ENCODE measurements at regions of chr20 and their contacts with region 1.

Region 1: GRCh38 chr20:12037521-12037920 is 119.8 kb downstream of the BTBD3 start:
- DNase-seq: no peak
- H3K4me3 ChIP-seq: no peak overlapping the region
- H3K27ac ChIP-seq: no peak overlapping the region
- H3K4me1 ChIP-seq: no peaks in the 10 kb centered on the region
- H3K27me3 ChIP-seq: no peaks in the 10 kb centered on the region
- CTCF ChIP-seq: no peak
- POLR2A ChIP-seq: no peak

Region 2: DNA sequence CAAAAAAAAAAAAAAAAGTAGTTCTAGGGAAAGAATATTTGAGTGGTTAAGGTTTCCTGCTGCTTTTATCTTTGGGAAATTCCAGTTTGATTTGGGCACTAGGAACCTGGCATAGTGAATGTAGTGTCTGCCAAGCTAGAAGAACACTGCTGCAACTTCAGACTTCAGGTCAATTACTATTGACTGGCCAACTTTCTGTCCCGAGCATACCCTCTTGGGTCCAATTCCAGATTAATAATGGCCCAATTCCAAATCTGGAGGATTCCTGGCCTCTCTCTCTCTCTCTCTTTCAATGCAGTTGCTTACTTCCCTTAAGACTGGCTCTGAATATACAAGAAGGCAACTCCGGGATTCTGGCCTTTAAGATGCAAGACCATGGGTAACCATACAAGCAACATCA is 1927.9 kb before region 1 on chr20:
- intact Hi-C with region 1: loop called (anchors 5 kb)
- DNase-seq: no peak
- H3K4me3 ChIP-seq: no peak overlapping the region
- H3K27ac ChIP-seq: no peak overlapping the region
- H3K4me1 ChIP-seq: no peaks in the 10 kb centered on the region
- H3K27me3 ChIP-seq: no peaks in the 10 kb centered on the region
- CTCF ChIP-seq: no peak
- POLR2A ChIP-seq: no peak

Region 3: GRCh38 chr20:10466325-10466724 is 1571.2 kb before region 1 on chr20:
- intact Hi-C with region 1: no loop called
- DNase-seq: no peak
- H3K4me3 ChIP-seq: no peak overlapping the region
- H3K27ac ChIP-seq: no peak overlapping the region
- H3K4me1 ChIP-seq: no peaks in the 10 kb centered on the region
- H3K27me3 ChIP-seq: no peaks in the 10 kb centered on the region
- CTCF ChIP-seq: no peak
- POLR2A ChIP-seq: no peak

Region 4: DNA sequence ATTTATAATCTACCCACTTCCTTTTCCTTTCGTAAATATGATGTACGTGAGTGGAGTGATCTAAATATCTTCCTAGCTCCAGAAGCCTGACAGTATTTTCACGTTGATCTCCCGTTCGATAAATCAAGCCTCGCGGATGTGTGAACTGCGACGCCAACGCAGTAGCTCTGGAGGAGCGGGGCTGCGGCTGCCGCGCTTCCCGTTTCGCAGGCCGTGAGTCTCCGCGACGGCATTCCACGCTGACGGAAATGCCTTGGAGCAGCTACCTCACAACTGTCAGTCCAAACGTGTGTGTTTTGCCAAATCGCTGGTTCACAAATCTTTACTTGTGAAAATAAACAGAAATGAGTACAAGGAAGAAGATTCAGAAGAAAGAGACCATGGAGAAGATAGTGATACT is 78.7 kb before region 1 on chr20:
- intact Hi-C with region 1: no loop called
- DNase-seq: no peak
- H3K4me3 ChIP-seq: peak overlapping the region in 2 of 3 donors; percentile 7 to 10
- H3K27ac ChIP-seq: no peak overlapping the region
- H3K4me1 ChIP-seq: no peaks in the 10 kb centered on the region
- H3K27me3 ChIP-seq: no peaks in the 10 kb centered on the region
- CTCF ChIP-seq: no peak
- POLR2A ChIP-seq: no peak

Region 5: DNA sequence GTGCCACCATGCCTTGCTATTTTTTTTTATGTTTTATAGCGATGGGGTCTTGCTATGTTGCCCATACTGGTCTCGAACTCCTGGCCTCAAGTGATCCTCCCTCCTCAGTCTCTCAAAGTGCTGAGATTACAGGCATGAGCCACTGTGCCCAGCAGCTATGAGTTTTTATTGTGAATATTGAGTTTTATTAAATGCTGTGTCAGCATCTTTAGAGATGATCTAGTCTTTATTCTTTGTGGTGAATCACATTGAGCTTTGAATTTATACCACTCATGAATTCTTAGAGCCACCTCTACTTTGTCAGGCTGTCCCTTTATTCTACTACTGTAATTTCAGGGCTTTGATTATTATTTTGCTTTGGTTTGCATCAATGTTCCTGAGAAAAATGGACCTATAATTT is 308.5 kb after region 1 on chr20:
- intact Hi-C with region 1: no loop called
- DNase-seq: no peak
- H3K4me3 ChIP-seq: no peak overlapping the region
- H3K27ac ChIP-seq: no peak overlapping the region
- H3K4me1 ChIP-seq: no peaks in the 10 kb centered on the region
- H3K27me3 ChIP-seq: no peaks in the 10 kb centered on the region
- CTCF ChIP-seq: no peak
- POLR2A ChIP-seq: no peak